Naive thymus-derived CD4-positive, alpha-beta T cell (primary cell): ENCODE measurements at regions of chr16 and their contacts with region 1.

Region 1: GRCh38 chr16:89122322-89122851 is 28.7 kb downstream of the ACSF3 start:
- DNase-seq: peak in 8 of 9 donors; percentile 42 to 91 (median 88)
- ATAC-seq: peak; percentile 94
- H3K4me3 ChIP-seq: peak overlapping the region; percentile 55
- H3K4me3 Mint-ChIP-seq: peak overlapping the region in 9 of 10 donors; percentile 65 to 78 (median 72)
- H3K27ac ChIP-seq: peak overlapping the region; percentile 66
- H3K27ac Mint-ChIP-seq: peak overlapping the region; percentile 55 to 99 (median 94)
- H3K4me1 ChIP-seq: peaks cover 3 to 30% of the 10 kb centered on the region in 2 donors
- H3K4me1 Mint-ChIP-seq: peaks cover 11 to 76% (median 46%) of the 10 kb centered on the region in 7 donors
- H3K27me3 ChIP-seq: no peaks in the 10 kb centered on the region
- H3K27me3 Mint-ChIP-seq: no peaks in the 10 kb centered on the region

Region 2: DNA sequence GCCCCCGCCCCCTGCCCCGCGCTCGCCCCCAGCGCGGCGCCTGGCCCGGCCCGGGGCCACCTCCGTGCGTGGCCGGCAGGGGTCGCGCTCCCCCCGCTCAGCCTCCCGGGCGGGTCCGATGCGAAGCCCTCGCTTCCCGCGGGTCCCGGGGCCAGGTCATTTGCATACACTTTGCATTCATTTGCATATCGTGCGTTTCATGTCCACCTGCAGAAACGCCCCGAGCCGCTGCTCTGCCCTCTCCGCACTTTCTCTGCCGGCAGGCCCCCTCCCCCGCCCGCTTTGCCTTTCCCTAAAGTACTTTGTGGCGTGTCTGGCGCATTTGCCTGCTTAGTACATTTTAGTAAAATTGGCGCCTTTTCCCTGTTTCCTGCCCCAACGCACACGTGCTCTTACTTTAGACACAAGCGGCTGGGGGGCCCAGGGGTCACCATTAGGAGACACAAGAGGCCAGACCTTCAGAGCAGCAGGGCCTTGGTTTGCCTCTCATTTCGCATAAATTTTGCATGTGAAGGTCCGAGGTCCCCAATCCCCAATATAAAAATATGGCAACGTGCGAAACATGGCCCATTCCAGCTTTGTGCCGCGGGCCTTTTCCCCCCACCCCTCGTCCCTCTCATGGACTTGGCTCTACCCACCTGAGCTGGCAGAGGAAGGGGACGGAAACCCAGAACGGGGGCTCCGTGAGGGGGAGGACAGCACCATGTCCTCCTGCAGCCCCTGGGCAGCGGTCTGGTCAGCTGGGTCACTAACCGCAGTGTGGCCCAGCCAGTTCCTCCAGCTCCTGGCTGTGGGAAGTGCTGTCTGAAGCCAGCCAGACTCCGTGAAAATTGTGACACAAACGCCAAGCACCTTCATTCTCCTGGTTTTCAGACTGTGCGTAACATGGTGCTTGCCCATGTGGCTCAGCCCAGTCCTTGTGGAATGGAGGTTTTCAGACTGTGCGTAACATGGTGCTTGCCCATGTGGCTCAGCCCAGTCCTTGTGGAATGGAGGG is 180.2 kb before region 1 on chr16:
- CTCF ChIA-PET with region 1: no interaction called
- POLR2A ChIA-PET with region 1: no interaction called
- intact Hi-C with region 1: loop called in 1 of 2 experiments (anchors 1 kb)
- DNase-seq: peak; percentile 21 to 67 (median 51)
- ATAC-seq: peak; percentile 76
- H3K4me3 ChIP-seq: no peak overlapping the region
- H3K4me3 Mint-ChIP-seq: peak overlapping the region; percentile 27 to 84 (median 52)
- H3K27ac ChIP-seq: no peak overlapping the region
- H3K27ac Mint-ChIP-seq: peak overlapping the region in 2 of 9 donors; percentile 1 to 41
- H3K4me1 ChIP-seq: peaks cover 3 to 6% of the 10 kb centered on the region in 2 donors
- H3K4me1 Mint-ChIP-seq: peaks cover 0 to 19% (median 5%) of the 10 kb centered on the region in 7 donors
- H3K27me3 ChIP-seq: peaks cover 0 to 15% of the 10 kb centered on the region in 2 donors
- H3K27me3 Mint-ChIP-seq: peaks cover 17 to 44% (median 25%) of the 10 kb centered on the region in 5 donors

Region 3: GRCh38 chr16:89052890-89053592 is 69.3 kb before region 1 on chr16:
- CTCF ChIA-PET with region 1: no interaction called
- POLR2A ChIA-PET with region 1: no interaction called
- intact Hi-C with region 1: no loop called
- DNase-seq: peak in 1 of 9 donors; percentile 20
- ATAC-seq: peak; percentile 66
- H3K4me3 ChIP-seq: no peak overlapping the region
- H3K4me3 Mint-ChIP-seq: peak overlapping the region; percentile 81 to 94 (median 88)
- H3K27ac ChIP-seq: peak overlapping the region; percentile 53
- H3K27ac Mint-ChIP-seq: peak overlapping the region in 8 of 9 donors; percentile 9 to 97 (median 86)
- H3K4me1 ChIP-seq: no peaks in the 10 kb centered on the region
- H3K4me1 Mint-ChIP-seq: peaks cover 0 to 11% (median 4%) of the 10 kb centered on the region in 7 donors
- H3K27me3 ChIP-seq: no peaks in the 10 kb centered on the region
- H3K27me3 Mint-ChIP-seq: no peaks in the 10 kb centered on the region

Region 4: DNA sequence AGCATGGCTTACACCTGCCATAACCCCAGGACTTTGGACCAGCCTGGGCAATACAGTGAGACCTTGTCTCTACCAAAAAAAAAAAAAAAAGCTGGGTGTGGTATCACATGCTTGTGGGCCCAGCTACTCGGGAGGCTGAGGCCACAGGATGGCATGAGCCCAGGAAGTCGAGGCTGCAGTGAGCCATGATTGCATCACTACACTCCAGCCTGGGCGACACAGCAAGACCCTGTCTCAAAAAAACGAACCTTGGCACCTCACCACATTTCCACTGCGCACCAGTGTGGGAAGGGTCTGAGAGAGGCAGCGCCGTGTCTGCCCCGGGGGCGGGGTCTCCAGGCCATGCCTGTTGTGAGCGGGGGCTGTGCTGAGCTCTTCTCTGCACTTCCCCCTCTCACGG is 22.5 kb before region 1 on chr16:
- CTCF ChIA-PET with region 1: interaction called, 8 read pairs
- POLR2A ChIA-PET with region 1: interaction called, 18 read pairs
- intact Hi-C with region 1: loop called in 1 of 2 experiments (anchors 1 kb)
- DNase-seq: no peak
- ATAC-seq: no peak
- H3K4me3 ChIP-seq: no peak overlapping the region
- H3K4me3 Mint-ChIP-seq: peak overlapping the region in 7 of 10 donors; percentile 20 to 96 (median 53)
- H3K27ac ChIP-seq: no peak overlapping the region
- H3K27ac Mint-ChIP-seq: peak overlapping the region; percentile 51 to 100 (median 83)
- H3K4me1 ChIP-seq: peaks cover 42 to 66% of the 10 kb centered on the region in 2 donors
- H3K4me1 Mint-ChIP-seq: peaks cover 46 to 84% (median 70%) of the 10 kb centered on the region in 7 donors
- H3K27me3 ChIP-seq: no peaks in the 10 kb centered on the region
- H3K27me3 Mint-ChIP-seq: no peaks in the 10 kb centered on the region

Region 5: DNA sequence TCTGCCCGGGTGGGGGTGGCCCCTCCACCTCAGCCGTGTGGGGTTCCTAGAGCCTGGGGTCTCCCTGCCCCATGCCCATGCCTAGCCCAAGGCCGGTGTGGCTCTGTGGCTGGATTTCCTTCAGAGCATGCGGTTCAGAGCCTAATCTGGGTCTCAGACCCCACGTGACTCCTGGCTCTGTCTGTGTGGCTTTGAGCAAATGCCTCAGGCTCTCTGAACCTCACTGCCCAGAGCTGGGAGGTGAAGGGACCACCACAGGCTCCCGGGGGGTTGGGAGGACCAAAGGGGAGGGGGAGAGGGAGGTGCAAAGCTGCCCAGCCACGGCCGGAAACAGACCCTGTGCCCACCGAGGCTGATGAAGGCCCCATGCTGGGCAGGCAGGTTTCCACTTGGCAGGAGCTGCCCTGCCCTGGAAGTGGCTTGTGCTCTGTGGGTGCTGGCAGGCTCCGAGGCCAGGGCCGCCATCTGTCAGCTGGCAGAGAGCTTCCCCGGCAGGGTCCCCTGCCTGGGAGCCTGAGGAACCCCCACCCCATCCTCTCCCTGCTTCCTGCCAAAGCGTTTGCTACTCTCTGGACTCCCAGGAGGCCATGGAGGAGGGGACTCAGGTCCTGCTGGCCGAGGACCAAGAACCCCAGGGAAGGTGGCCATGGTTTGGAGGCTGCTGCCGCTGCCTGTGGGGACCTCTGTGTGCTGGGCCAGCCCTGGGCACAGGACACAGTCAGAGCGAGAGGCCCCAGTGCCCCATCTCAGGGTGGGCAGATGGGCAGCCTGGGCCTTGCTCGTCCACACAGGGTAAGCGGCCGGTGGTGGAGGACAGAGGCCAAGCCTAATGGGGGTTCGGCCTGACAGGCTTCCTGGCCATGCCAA is 53.1 kb after region 1 on chr16:
- CTCF ChIA-PET with region 1: no interaction called
- POLR2A ChIA-PET with region 1: no interaction called
- intact Hi-C with region 1: no loop called
- DNase-seq: no peak
- ATAC-seq: no peak
- H3K4me3 ChIP-seq: no peak overlapping the region
- H3K4me3 Mint-ChIP-seq: no peak overlapping the region
- H3K27ac ChIP-seq: no peak overlapping the region
- H3K27ac Mint-ChIP-seq: no peak overlapping the region
- H3K4me1 ChIP-seq: peaks cover 6% of the 10 kb centered on the region in 2 donors
- H3K4me1 Mint-ChIP-seq: peaks cover 5% of the 10 kb centered on the region in 7 donors
- H3K27me3 ChIP-seq: no peaks in the 10 kb centered on the region
- H3K27me3 Mint-ChIP-seq: peaks cover 0 to 5% (median 0%) of the 10 kb centered on the region in 5 donors